ENCODE measurements at regions of chr10 and their contacts with region 1.

Region 1: GRCh38 chr10:101818119-101818871 is at the start of gene OGA:
- DNase-seq: peak; percentile 99
- H3K4me3 Mint-ChIP-seq: peak within 1 kb of the TSS; percentile 96
- H3K27ac Mint-ChIP-seq: peak within 1 kb of the TSS; percentile 96
- H3K4me1 Mint-ChIP-seq: peaks cover 41% of the 10 kb centered on the region
- H3K27me3 Mint-ChIP-seq: no peaks in the 10 kb centered on the region
- total RNA-seq, gene OGA: 142 to 145 TPM

Region 2: GRCh38 chr10:101763141-101763846 is 55.0 kb before region 1 on chr10:
- CTCF ChIA-PET with region 1: no interaction called
- POLR2A ChIA-PET with region 1: no interaction called
- DNase-seq: no peak
- H3K4me3 Mint-ChIP-seq: no peak overlapping the region
- H3K27ac Mint-ChIP-seq: no peak overlapping the region
- H3K4me1 Mint-ChIP-seq: no peaks in the 10 kb centered on the region
- H3K27me3 Mint-ChIP-seq: peaks cover 29% of the 10 kb centered on the region

Region 3: GRCh38 chr10:101782811-101783735 is 35.2 kb before region 1 on chr10 and contains the start of gene NPM3:
- CTCF ChIA-PET with region 1: interaction called, 15 read pairs
- POLR2A ChIA-PET with region 1: interaction called, 54 read pairs
- DNase-seq: peak; percentile 85
- H3K4me3 Mint-ChIP-seq: peak within 1 kb of the TSS; percentile 100
- H3K27ac Mint-ChIP-seq: peak within 1 kb of the TSS; percentile 80
- H3K4me1 Mint-ChIP-seq: peaks cover 66% of the 10 kb centered on the region
- H3K27me3 Mint-ChIP-seq: peaks cover 7% of the 10 kb centered on the region
- total RNA-seq, gene NPM3: 26.6 to 26.7 TPM

Region 4: GRCh38 chr10:101807158-101807557 is 11.1 kb before region 1 on chr10:
- CTCF ChIA-PET with region 1: no interaction called
- POLR2A ChIA-PET with region 1: interaction called, 21 read pairs
- DNase-seq: no peak
- H3K4me3 Mint-ChIP-seq: no peak overlapping the region
- H3K27ac Mint-ChIP-seq: no peak overlapping the region
- H3K4me1 Mint-ChIP-seq: peaks cover 9% of the 10 kb centered on the region
- H3K27me3 Mint-ChIP-seq: no peaks in the 10 kb centered on the region

Region 5: DNA sequence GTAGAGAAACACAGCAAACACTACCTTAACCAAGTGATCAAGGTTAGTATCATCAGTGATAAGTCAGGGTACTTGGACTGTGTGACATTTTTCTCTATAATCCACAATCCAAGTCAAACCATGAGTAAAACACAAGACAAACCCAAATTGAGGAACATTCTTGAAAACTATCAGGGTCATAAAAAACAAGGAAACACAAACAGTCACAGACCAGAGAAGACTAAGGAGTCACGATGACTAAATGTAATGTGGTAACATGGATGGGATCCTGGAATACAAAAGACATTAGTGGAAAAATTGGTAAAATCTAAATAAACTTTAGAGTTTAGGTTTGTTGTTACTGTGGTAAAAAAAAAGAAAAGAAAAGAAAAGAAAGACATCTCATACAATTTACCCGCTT is 133.9 kb after region 1 on chr10:
- CTCF ChIA-PET with region 1: no interaction called
- POLR2A ChIA-PET with region 1: no interaction called
- DNase-seq: no peak
- H3K4me3 Mint-ChIP-seq: no peak overlapping the region
- H3K27ac Mint-ChIP-seq: no peak overlapping the region
- H3K4me1 Mint-ChIP-seq: no peaks in the 10 kb centered on the region
- H3K27me3 Mint-ChIP-seq: no peaks in the 10 kb centered on the region

Region 6: DNA sequence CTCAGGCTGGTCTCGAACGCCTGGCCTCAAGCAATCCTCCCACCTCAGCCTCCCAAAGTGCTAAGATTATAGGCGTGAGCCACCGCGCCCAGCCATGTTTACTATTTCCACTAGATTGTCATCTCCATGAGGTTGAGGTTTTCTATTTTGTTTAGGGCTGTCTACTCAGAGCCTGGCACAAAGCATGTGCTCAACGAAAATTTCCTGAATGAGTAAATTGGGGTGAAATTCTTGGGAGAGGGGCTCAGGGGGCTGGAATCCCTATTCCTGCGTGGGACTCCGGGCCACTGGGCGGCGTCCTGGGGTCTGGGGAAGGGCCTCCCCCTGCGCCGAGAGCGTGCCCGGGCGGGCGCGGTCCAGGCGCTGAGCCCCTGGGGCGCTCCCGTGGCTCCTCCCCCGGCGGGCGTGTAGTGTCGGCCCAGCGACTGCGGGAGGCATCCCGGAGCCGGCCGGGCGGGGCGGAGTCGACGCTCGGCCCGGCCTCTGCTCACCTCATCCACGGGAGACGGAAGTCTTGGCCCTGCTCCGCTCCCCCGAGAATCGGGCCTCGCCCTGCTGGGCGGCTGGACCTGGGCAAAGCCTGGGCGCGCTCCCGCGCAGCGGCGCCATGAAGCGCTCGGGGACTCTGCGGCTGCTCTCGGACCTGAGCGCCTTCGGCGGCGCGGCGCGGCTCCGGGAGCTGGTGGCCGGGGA is 246.7 kb after region 1 on chr10 and contains the start of gene HPS6:
- CTCF ChIA-PET with region 1: no interaction called
- POLR2A ChIA-PET with region 1: interaction called, 12 read pairs
- DNase-seq: peak; percentile 92
- H3K4me3 Mint-ChIP-seq: peak within 1 kb of the TSS; percentile 84
- H3K27ac Mint-ChIP-seq: peak within 1 kb of the TSS; percentile 83
- H3K4me1 Mint-ChIP-seq: peaks cover 32% of the 10 kb centered on the region
- H3K27me3 Mint-ChIP-seq: no peaks in the 10 kb centered on the region
- total RNA-seq, gene HPS6: 24.7 to 25.7 TPM

Region 7: GRCh38 chr10:102151774-102152544 is 333.7 kb after region 1 on chr10 and contains the start of gene NOLC1:
- CTCF ChIA-PET with region 1: no interaction called
- POLR2A ChIA-PET with region 1: interaction called, 12 read pairs
- DNase-seq: peak; percentile 100
- H3K4me3 Mint-ChIP-seq: peak within 1 kb of the TSS; percentile 90
- H3K27ac Mint-ChIP-seq: peak within 1 kb of the TSS; percentile 87
- H3K4me1 Mint-ChIP-seq: peaks cover 55% of the 10 kb centered on the region
- H3K27me3 Mint-ChIP-seq: no peaks in the 10 kb centered on the region
- total RNA-seq, gene NOLC1: 57.0 to 64.3 TPM

Measured in activated CD4-positive, alpha-beta memory T cell treated with anti-CD3 and anti-CD28 coated beads, Interleukin-2, amount 10 ng/mL, durations not matched to agents 7 days and 5 days (primary cell).